Breast epithelium (tissue), 4 donors: ENCODE measurements at regions of chr2 and their contacts with region 1.

Region 1: GRCh38 chr2:125679903-125680302 is 976.1 kb upstream of the GYPC start:
- DNase-seq: no peak
- H3K4me3 ChIP-seq: no peak overlapping the region
- H3K27ac ChIP-seq: no peak overlapping the region
- H3K4me1 ChIP-seq: no peaks in the 10 kb centered on the region
- H3K27me3 ChIP-seq: no peaks in the 10 kb centered on the region
- CTCF ChIP-seq: no peak
- POLR2A ChIP-seq: no peak

Region 2: DNA sequence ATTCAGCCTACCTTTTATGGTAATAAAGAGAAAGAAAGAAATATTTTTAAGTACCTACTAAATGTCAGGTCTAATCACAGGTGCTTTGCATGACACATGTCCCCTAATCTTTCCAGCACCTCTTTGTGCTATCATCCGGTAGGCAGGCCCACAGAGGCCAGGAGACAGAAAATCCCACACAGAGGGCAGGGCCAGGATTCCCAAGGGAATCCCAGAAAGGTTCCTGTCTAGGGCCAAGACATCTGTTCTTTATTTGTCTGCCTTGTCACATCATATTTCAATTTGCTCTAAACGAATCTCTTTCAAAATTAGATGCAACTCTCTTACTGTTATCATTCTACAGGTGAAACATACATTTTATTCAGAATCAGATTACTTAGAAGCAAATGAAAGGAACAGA is 300.0 kb after region 1 on chr2:
- intact Hi-C with region 1: loop called (anchors 5 kb)
- DNase-seq: no peak
- H3K4me3 ChIP-seq: no peak overlapping the region
- H3K27ac ChIP-seq: no peak overlapping the region
- H3K4me1 ChIP-seq: no peaks in the 10 kb centered on the region
- H3K27me3 ChIP-seq: no peaks in the 10 kb centered on the region
- CTCF ChIP-seq: no peak
- POLR2A ChIP-seq: no peak